ENCODE measurements at regions of chr3 and their contacts with region 1.

Region 1: GRCh38 chr3:98014268-98014585 is 20.9 kb downstream of the GABRR3 start:
- DNase-seq: no peak
- ATAC-seq: no peak
- H3K4me3 ChIP-seq: no peak overlapping the region
- H3K27ac ChIP-seq: no peak overlapping the region
- H3K4me1 ChIP-seq: peaks cover 8% of the 10 kb centered on the region; the same call in 1 of the 2 replicates
- H3K27me3 ChIP-seq: no peaks in the 10 kb centered on the region
- CTCF ChIP-seq: no peak

Region 2: GRCh38 chr3:97871801-97872524 is 142.3 kb before region 1 on chr3:
- CTCF ChIA-PET with region 1: interaction called, 11 read pairs
- POLR2A ChIA-PET with region 1: no interaction called
- intact Hi-C with region 1: no loop called
- DNase-seq: peak; percentile 98
- ATAC-seq: peak; percentile 96
- H3K4me3 ChIP-seq: peak overlapping the region; percentile 45; the same call in 1 of the 2 replicates
- H3K27ac ChIP-seq: peak overlapping the region; percentile 87
- H3K4me1 ChIP-seq: peaks cover 25% of the 10 kb centered on the region
- H3K27me3 ChIP-seq: no peaks in the 10 kb centered on the region
- CTCF ChIP-seq: no peak

Measured in PC-3 (cell line).